ENCODE measurements at regions of chr1 and their contacts with region 1.

Region 1: GRCh38 chr1:112388431-112388830 is 7.6 kb upstream of the CTTNBP2NL start:
- DNase-seq: peak in 2 of 5 donors; percentile 11 to 34
- H3K4me3 ChIP-seq: no peak overlapping the region
- H3K27ac ChIP-seq: no peak overlapping the region
- H3K4me1 ChIP-seq: peaks cover 0 to 5% (median 0%) of the 10 kb centered on the region in 3 donors
- H3K27me3 ChIP-seq: no peaks in the 10 kb centered on the region
- CTCF ChIP-seq: no peak

Region 2: GRCh38 chr1:112461194-112462082 is 73.0 kb after region 1 on chr1:
- intact Hi-C with region 1: no loop called
- DNase-seq: peak in 1 of 5 donors; percentile 20
- H3K4me3 ChIP-seq: no peak overlapping the region
- H3K27ac ChIP-seq: no peak overlapping the region
- H3K4me1 ChIP-seq: peaks cover 0 to 6% (median 2%) of the 10 kb centered on the region in 3 donors
- H3K27me3 ChIP-seq: no peaks in the 10 kb centered on the region
- CTCF ChIP-seq: no peak

Region 3: DNA sequence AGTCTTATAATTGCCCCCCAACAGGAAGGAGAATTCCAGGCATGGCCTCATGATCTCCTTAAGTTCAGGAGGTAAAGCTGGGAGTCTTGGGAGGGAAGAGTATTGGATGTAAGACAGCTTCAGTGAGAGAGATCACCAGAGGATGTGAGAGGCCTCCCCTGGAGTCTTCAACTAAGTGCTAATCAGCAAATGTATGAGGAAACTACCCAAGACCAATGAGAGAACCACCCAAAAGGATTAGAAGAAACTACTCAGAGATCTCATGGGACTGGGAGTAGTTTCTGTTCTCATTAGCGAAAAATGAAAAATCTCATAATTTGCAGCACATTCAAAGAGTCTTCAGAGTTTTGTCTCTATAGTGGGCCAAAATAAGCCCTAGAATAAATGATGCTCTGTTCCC is 83.7 kb after region 1 on chr1:
- intact Hi-C with region 1: loop called (anchors 10 kb)
- DNase-seq: no peak
- H3K4me3 ChIP-seq: no peak overlapping the region
- H3K27ac ChIP-seq: no peak overlapping the region
- H3K4me1 ChIP-seq: no peaks in the 10 kb centered on the region
- H3K27me3 ChIP-seq: no peaks in the 10 kb centered on the region
- CTCF ChIP-seq: no peak

Region 4: DNA sequence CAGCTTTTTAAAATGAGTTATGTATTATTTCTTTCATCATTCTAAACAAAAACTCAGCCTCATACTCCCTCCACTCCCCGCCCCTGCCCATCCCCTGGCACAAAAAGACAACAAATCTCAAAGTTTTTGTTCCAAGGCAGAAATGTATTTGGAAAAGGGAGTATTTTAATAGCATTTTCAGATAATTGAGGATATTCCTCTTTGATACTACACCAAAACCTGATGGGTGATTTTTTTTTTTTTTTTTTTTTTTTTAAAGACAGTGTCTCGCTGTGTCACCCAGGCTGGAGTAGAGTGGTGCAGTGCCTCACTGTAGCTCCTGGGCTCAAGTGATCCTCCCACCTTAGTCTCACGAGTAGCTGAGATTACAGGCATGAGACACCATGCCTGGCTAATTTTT is 551.4 kb after region 1 on chr1:
- intact Hi-C with region 1: no loop called
- DNase-seq: no peak
- H3K4me3 ChIP-seq: no peak overlapping the region
- H3K27ac ChIP-seq: no peak overlapping the region
- H3K4me1 ChIP-seq: no peaks in the 10 kb centered on the region
- H3K27me3 ChIP-seq: no peaks in the 10 kb centered on the region
- CTCF ChIP-seq: no peak

Measured in kidney (tissue), 22 donors.